Calu3 (cell line): ENCODE measurements at regions of chr10 and their contacts with region 1.

Region 1: DNA sequence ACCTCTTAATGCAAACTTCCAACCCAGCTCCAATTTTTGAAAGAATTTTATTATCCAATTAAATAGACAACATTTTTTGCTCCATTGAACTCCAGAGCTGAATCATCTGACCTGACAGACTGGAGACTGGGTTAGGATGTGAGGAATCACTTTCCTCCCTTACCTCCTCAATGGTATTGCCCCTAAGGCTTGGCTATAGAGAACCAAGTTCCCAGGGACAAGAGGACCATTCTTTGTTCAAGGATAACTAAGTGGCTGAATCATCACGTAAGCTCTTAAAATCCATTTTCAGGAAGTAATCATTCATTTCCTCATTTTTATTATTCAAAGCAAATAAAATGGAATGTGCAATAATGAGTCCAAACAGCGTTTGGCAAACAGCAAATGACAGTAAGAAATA is 335.1 kb downstream of the GATA3 start:
- DNase-seq: peak; percentile 42
- H3K4me3 Mint-ChIP-seq: no peak overlapping the region
- H3K27ac Mint-ChIP-seq: peak overlapping the region; percentile 50
- H3K4me1 Mint-ChIP-seq: peaks cover 49% of the 10 kb centered on the region
- H3K27me3 Mint-ChIP-seq: no peaks in the 10 kb centered on the region
- CTCF ChIP-seq: no peak

Region 2: GRCh38 chr10:8543361-8544069 is 153.9 kb after region 1 on chr10:
- CTCF ChIA-PET with region 1: no interaction called
- intact Hi-C with region 1: loop called (anchors 5 kb)
- DNase-seq: peak; percentile 88
- H3K4me3 Mint-ChIP-seq: peak overlapping the region; percentile 40
- H3K27ac Mint-ChIP-seq: peak overlapping the region; percentile 99
- H3K4me1 Mint-ChIP-seq: peaks cover 44% of the 10 kb centered on the region
- H3K27me3 Mint-ChIP-seq: no peaks in the 10 kb centered on the region
- CTCF ChIP-seq: no peak